ENCODE measurements at regions of chr5 and their contacts with region 1.

Region 1: DNA sequence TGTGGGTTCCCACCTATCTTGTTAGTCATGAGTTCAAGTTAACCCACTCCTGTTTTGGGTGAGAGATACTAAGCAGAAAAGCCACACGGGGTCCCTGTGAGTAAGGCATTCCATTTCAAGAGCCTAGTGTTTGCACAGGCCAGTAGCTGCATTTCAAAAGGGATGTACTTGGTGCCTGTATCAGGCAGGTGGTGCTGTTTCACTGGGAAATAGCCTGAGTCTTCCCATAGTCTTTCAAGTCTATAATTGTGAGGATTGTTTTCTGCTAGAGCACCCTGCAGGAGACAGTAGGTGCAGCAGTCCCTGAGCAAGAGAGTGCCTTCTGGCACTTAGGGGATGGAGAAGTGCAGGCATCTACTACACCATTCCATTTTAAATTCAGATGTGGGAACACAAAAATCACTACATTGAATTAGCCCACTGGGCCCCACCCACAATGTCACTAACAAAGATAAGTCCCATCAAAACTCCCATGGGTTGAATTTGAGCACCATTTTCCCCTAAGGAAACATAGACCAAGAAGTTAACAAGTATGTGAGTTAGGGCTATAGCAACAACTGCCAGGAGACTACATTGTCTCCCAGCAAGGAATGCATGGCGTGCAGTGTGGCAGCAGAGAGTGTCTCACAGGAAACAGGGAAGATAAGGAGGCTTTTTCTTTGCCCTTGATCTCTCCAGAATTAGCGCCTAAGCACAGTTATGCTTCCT is 263.2 kb downstream of the COX7C start:
- DNase-seq: no peak
- H3K4me3 ChIP-seq: no peak overlapping the region
- H3K27ac ChIP-seq: no peak overlapping the region
- H3K4me1 ChIP-seq: no peaks in the 10 kb centered on the region
- H3K27me3 ChIP-seq: no peaks in the 10 kb centered on the region
- CTCF ChIP-seq: peak; percentile 45 to 53 (median 50)
- EP300 ChIP-seq: no peak
- POLR2A ChIP-seq: no peak

Region 2: GRCh38 chr5:87015901-87016300 is 135.0 kb after region 1 on chr5:
- intact Hi-C with region 1: loop called (anchors 10 kb)
- DNase-seq: no peak
- H3K4me3 ChIP-seq: no peak overlapping the region
- H3K27ac ChIP-seq: no peak overlapping the region
- H3K4me1 ChIP-seq: peaks cover 0 to 14% (median 8%) of the 10 kb centered on the region in 4 donors
- H3K27me3 ChIP-seq: no peaks in the 10 kb centered on the region
- CTCF ChIP-seq: no peak
- EP300 ChIP-seq: no peak
- POLR2A ChIP-seq: no peak

Measured in esophagus muscularis mucosa (tissue), 4 donors.